Heart right ventricle (tissue), 16 donors: ENCODE measurements at regions of chr6 and their contacts with region 1.

Region 1: GRCh38 chr6:110944681-110945151 is 13.8 kb upstream of the GTF3C6 start:
- DNase-seq: no peak
- ATAC-seq: peak in 1 of 8 donors; percentile 57
- H3K4me3 ChIP-seq: no peak overlapping the region
- H3K27ac ChIP-seq: no peak overlapping the region
- H3K4me1 ChIP-seq: peaks cover 0 to 14% (median 0%) of the 10 kb centered on the region in 9 donors
- H3K27me3 ChIP-seq: no peaks in the 10 kb centered on the region
- CTCF ChIP-seq: no peak

Region 2: GRCh38 chr6:110826236-110827129 is 118.2 kb before region 1 on chr6:
- intact Hi-C with region 1: loop called in 1 of 10 experiments (anchors 10 kb)
- DNase-seq: no peak
- ATAC-seq: peak in 5 of 8 donors; percentile 39 to 55 (median 47)
- H3K4me3 ChIP-seq: peak overlapping the region in 1 of 10 donors; percentile 14
- H3K27ac ChIP-seq: peak overlapping the region in 3 of 10 donors; percentile 36 to 86 (median 44)
- H3K4me1 ChIP-seq: peaks cover 0 to 37% (median 15%) of the 10 kb centered on the region in 9 donors
- H3K27me3 ChIP-seq: no peaks in the 10 kb centered on the region
- CTCF ChIP-seq: no peak